IMR-90 (cell line): ENCODE measurements at regions of chr1 and their contacts with region 1.

Region 1: GRCh38 chr1:234851450-234852438 is 241.8 kb upstream of the IRF2BP2 start:
- DNase-seq: peak; percentile 55
- ATAC-seq: no peak
- H3K4me3 ChIP-seq: no peak overlapping the region
- H3K27ac ChIP-seq: no peak overlapping the region
- H3K4me1 ChIP-seq: peaks cover 11% of the 10 kb centered on the region
- H3K27me3 ChIP-seq: no peaks in the 10 kb centered on the region
- CTCF ChIP-seq: no peak
- POLR2A ChIP-seq: no peak
- RAD21 ChIP-seq: 0 out of 2 replicates have a peak, but pooled peaks have one; percentile 1

Region 2: GRCh38 chr1:235093696-235094592 is 242.2 kb after region 1 on chr1:
- CTCF ChIA-PET with region 1: no interaction called
- POLR2A ChIA-PET with region 1: no interaction called
- dilution Hi-C with region 1: no loop called
- in situ Hi-C with region 1: loop called (anchors 25 kb)
- intact Hi-C with region 1: no loop called
- DNase-seq: peak; percentile 55
- ATAC-seq: peak; percentile 91
- H3K4me3 ChIP-seq: no peak overlapping the region
- H3K27ac ChIP-seq: no peak overlapping the region
- H3K4me1 ChIP-seq: peaks cover 11% of the 10 kb centered on the region
- H3K27me3 ChIP-seq: no peaks in the 10 kb centered on the region
- CTCF ChIP-seq: peak; percentile 87
- POLR2A ChIP-seq: no peak
- RAD21 ChIP-seq: peak; percentile 72